Activated naive CD4-positive, alpha-beta T cell treated with anti-CD3 and anti-CD28 coated beads for 36 hours (primary cell): ENCODE measurements at regions of chr13 and their contacts with region 1.

Region 1: DNA sequence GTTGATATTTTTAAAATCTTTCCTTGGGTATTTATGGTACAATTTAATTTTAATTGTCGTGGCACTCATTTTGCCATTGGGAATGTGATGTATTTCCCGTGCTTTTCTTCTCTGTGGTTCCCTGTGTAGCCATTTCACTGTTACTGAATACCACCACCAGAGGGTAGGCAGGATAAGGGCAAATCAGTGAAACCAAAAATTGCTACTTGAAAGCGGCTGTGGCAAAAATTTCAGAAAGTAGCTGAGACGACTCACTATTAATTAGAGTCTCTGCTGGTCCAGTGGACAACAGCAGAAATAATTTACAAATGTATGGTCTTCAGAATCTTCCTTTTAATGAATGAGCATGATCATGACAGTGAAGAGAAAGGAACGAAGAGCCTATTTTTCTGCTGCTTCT is 34.4 kb upstream of the MIR17HG start:
- DNase-seq: peak; percentile 40
- H3K4me3 Mint-ChIP-seq: peak overlapping the region; percentile 39
- H3K27ac Mint-ChIP-seq: no peak overlapping the region
- H3K4me1 Mint-ChIP-seq: peaks cover 9% of the 10 kb centered on the region
- H3K27me3 Mint-ChIP-seq: peaks cover 2% of the 10 kb centered on the region

Region 2: GRCh38 chr13:91331047-91331915 is 18.2 kb after region 1 on chr13:
- CTCF ChIA-PET with region 1: interaction called, 7 read pairs
- intact Hi-C with region 1: loop called (anchors 1 kb)
- DNase-seq: no peak
- H3K4me3 Mint-ChIP-seq: peak overlapping the region; percentile 22
- H3K27ac Mint-ChIP-seq: peak overlapping the region; percentile 41
- H3K4me1 Mint-ChIP-seq: peaks cover 22% of the 10 kb centered on the region
- H3K27me3 Mint-ChIP-seq: no peaks in the 10 kb centered on the region

Region 3: GRCh38 chr13:91369441-91369831 is 56.3 kb after region 1 on chr13:
- CTCF ChIA-PET with region 1: interaction called, 4 read pairs
- intact Hi-C with region 1: loop called (anchors 2 kb)
- DNase-seq: peak; percentile 61
- H3K4me3 Mint-ChIP-seq: no peak overlapping the region
- H3K27ac Mint-ChIP-seq: peak overlapping the region; percentile 83
- H3K4me1 Mint-ChIP-seq: peaks cover 30% of the 10 kb centered on the region
- H3K27me3 Mint-ChIP-seq: peaks cover 3% of the 10 kb centered on the region

Region 4: DNA sequence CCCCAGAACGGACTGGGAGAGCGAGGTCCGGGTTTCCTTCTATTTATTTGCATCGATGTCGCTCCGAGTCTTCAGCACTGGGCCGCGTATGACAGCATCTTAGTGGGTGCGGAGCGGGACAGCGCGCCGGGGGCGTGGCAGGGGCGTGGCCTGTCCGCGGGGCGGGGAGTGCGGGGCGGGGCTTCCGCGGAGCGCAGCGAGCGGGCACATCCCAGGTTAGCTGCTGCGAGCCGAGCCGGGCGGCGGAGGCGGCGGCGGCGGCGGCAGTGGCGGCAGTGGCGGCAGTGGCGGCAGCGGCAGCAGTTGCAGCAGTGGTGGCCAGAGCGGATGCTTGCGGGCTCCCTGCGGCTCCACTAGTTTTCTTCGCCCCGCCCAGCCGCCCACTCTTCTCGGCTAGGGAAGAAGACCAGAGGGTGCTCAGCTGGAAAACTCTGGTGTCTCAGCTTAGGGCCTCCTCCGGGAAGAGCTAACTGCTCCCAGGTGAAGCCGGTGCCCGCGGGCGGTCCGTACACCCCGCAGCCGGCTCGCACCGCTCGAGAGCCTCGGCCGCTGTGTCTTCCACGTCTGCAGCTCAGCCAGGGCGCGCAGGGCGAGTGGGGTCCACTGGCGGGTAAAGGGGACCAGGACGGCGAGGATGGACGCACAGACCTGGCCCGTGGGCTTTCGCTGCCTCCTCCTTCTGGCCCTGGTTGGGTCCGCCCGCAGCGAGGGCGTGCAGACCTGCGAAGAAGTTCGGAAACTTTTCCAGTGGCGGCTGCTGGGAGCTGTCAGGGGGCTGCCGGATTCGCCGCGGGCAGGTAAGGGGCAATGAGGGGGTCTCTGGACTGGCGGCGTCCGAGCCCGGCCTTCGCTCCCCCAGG is 85.5 kb after region 1 on chr13 and contains the start of gene GPC5:
- CTCF ChIA-PET with region 1: no interaction called
- intact Hi-C with region 1: loop called (anchors 2 kb)
- DNase-seq: peak; percentile 84
- H3K4me3 Mint-ChIP-seq: peak within 1 kb of the TSS; percentile 75
- H3K27ac Mint-ChIP-seq: no peak within 1 kb of the TSS
- H3K4me1 Mint-ChIP-seq: peaks cover 17% of the 10 kb centered on the region
- H3K27me3 Mint-ChIP-seq: peaks cover 52% of the 10 kb centered on the region
- total RNA-seq, gene GPC5: 0.38 to 0.40 TPM

Region 5: GRCh38 chr13:91459485-91459884 is 146.4 kb after region 1 on chr13:
- CTCF ChIA-PET with region 1: interaction called, 4 read pairs
- intact Hi-C with region 1: loop called (anchors 1 kb)
- DNase-seq: no peak
- H3K4me3 Mint-ChIP-seq: no peak overlapping the region
- H3K27ac Mint-ChIP-seq: no peak overlapping the region
- H3K4me1 Mint-ChIP-seq: no peaks in the 10 kb centered on the region
- H3K27me3 Mint-ChIP-seq: peaks cover 10% of the 10 kb centered on the region

Region 6: GRCh38 chr13:91563799-91564198 is 250.7 kb after region 1 on chr13:
- CTCF ChIA-PET with region 1: no interaction called
- intact Hi-C with region 1: no loop called
- DNase-seq: no peak
- H3K4me3 Mint-ChIP-seq: no peak overlapping the region
- H3K27ac Mint-ChIP-seq: no peak overlapping the region
- H3K4me1 Mint-ChIP-seq: no peaks in the 10 kb centered on the region
- H3K27me3 Mint-ChIP-seq: no peaks in the 10 kb centered on the region